Activated naive CD4-positive, alpha-beta T cell treated with anti-CD3 and anti-CD28 coated beads for 36 hours (primary cell): ENCODE measurements at regions of chr10 and their contacts with region 1.

Region 1: DNA sequence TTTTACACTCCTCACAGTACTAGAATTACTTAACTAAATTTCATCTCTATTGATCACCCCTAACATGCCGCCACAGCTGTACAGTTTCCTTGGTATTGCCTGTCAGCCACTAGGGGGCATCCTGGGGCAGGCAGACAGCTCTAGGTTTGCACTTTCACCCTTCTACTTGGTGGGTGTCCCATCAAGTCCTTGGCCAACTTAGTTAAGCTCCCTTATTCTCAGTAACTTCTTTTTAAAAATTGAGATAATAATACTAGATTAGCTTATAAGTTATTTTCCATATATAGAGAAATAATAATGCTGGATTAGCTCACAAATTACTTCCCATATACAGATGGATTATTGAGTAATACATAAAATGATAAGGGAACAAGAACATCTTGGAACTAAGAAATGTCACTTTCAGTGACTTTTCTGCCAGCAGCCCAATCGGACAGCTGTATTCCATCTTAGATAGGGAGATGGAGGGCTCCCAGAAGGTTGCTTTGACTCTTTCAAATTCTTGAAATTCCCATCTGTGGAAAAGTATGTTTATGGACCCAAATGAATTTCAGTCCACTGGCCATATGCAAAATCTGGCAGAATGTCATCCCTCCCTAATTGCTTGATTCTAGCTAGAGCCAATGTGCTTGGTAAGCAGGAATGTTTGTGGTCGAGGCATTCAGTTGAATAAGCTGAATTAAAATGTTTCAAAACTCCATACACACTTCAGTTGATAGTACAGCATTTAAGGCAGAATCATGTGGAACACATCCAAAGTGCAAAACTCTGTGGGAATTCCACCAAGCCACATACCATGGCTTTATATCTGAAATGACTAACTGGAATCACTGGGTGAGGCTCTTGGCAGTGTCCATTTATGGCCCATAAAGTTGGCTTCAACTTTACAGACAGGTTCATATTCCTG is 309.7 kb downstream of the CSTF2T start:
- DNase-seq: peak; percentile 65
- H3K4me3 Mint-ChIP-seq: no peak overlapping the region
- H3K27ac Mint-ChIP-seq: no peak overlapping the region
- H3K4me1 Mint-ChIP-seq: no peaks in the 10 kb centered on the region
- H3K27me3 Mint-ChIP-seq: peaks cover 3% of the 10 kb centered on the region

Region 2: DNA sequence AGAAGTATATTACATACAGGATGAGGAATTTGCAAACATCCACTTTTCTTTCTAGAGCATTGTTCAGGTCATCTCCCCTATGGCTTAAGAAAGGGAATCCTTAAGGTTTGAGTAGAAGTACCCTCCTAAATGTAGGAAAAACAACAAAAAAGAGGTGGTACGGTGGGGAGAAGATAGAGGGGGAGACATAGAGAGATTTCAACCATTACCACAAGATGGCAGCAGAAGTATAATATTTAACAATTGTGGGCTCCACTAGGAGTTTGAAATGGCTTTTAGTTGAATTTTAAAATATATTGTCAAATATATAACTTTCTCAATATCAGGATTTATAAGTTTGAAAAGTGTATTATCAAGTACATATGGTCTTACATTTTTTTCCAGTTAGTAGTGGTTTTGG is 388.1 kb before region 1 on chr10:
- CTCF ChIA-PET with region 1: no interaction called
- intact Hi-C with region 1: loop called (anchors 10 kb)
- DNase-seq: no peak
- H3K4me3 Mint-ChIP-seq: no peak overlapping the region
- H3K27ac Mint-ChIP-seq: no peak overlapping the region
- H3K4me1 Mint-ChIP-seq: no peaks in the 10 kb centered on the region
- H3K27me3 Mint-ChIP-seq: peaks cover 4% of the 10 kb centered on the region

Region 3: GRCh38 chr10:51156926-51157325 is 232.7 kb before region 1 on chr10:
- CTCF ChIA-PET with region 1: no interaction called
- intact Hi-C with region 1: no loop called
- DNase-seq: no peak
- H3K4me3 Mint-ChIP-seq: no peak overlapping the region
- H3K27ac Mint-ChIP-seq: no peak overlapping the region
- H3K4me1 Mint-ChIP-seq: no peaks in the 10 kb centered on the region
- H3K27me3 Mint-ChIP-seq: no peaks in the 10 kb centered on the region

Region 4: DNA sequence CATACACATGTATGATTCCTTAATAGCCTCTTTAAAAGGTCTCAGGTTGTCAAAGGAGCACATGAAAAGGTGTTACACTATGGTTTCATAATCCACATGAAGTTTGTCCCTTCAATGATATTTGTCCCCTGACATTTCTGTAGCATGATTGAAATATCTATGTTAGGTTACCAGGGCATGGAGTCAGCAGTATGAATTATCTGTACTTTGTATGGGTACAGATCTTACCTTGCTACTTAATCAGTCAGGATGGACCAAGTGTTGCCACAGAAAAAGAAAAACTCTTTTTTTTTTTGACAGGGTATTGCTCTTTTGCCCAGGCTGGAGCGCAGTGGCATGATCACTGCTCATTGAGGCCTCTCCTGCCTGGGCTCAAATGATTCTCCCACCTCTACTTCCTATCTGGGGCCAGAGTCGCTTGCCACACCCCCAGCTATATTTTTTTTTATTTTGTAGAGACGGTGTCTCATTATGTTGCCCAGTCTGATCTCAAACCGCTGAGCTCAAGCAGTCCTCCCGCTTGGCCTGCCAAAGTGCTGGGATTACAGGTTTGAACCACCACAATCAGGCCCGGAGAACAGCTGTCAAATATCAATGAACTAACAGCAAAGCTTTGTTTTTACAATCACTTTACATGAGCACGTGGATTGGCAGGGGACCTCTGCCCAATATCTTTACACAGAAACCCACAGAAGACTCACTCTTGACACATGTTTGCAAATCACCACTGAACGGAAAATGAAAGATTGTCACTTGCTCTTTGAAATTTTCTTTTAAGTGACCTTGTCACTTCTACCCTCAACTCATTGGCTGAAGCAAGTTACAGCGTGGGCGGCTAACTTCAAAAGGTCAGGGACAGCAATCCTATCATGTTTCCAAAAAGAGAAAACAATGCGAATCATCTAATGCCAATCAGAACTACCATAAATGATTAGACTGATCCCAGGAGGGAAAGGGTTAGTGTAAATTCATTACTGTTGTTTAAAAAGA is 175.2 kb before region 1 on chr10:
- CTCF ChIA-PET with region 1: no interaction called
- intact Hi-C with region 1: no loop called
- DNase-seq: no peak
- H3K4me3 Mint-ChIP-seq: no peak overlapping the region
- H3K27ac Mint-ChIP-seq: no peak overlapping the region
- H3K4me1 Mint-ChIP-seq: no peaks in the 10 kb centered on the region
- H3K27me3 Mint-ChIP-seq: no peaks in the 10 kb centered on the region

Region 5: GRCh38 chr10:51960494-51960895 is 570.8 kb after region 1 on chr10:
- CTCF ChIA-PET with region 1: interaction called, 13 read pairs
- intact Hi-C with region 1: loop called (anchors 1 kb)
- DNase-seq: no peak
- H3K4me3 Mint-ChIP-seq: no peak overlapping the region
- H3K27ac Mint-ChIP-seq: no peak overlapping the region
- H3K4me1 Mint-ChIP-seq: no peaks in the 10 kb centered on the region
- H3K27me3 Mint-ChIP-seq: peaks cover 16% of the 10 kb centered on the region

Region 6: DNA sequence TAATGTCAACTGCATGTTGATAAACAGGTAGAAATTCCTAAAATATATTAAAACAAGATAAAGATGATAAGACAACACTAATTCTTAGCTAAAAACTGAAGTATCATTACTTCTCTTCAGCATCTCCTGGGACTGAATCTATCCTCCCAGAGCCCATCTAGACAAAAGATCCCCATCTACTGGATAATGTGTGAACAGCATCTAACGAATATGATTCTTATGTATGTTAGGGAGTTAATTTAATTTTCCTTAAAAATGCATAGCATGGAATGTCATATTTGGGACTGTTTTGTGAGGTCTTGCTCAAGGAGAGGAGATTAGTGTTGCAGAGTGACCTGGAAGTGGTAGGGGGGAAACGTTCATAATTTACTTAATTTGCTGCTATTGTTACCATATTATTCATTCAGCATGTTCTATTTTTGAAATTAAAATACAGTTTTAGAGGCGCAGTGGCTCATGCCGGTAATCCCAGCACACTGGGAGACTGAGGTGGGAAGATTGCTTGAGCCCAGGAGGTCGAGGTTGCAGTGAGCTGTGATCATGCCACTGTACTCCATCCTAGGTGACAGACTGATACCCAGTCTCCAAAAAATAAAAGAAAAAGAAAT is 614.8 kb after region 1 on chr10:
- CTCF ChIA-PET with region 1: interaction called, 5 read pairs
- intact Hi-C with region 1: loop called (anchors 1 kb)
- DNase-seq: no peak
- H3K4me3 Mint-ChIP-seq: no peak overlapping the region
- H3K27ac Mint-ChIP-seq: no peak overlapping the region
- H3K4me1 Mint-ChIP-seq: no peaks in the 10 kb centered on the region
- H3K27me3 Mint-ChIP-seq: peaks cover 3% of the 10 kb centered on the region